Activated CD4-positive, alpha-beta T cell treated with anti-CD3 and anti-CD28 coated beads for 36 hours (primary cell): ENCODE measurements at regions of chrX and their contacts with region 1.

Region 1: GRCh38 chrX:128106630-128107029 is 54.4 kb upstream of the ACTRT1 start:
- DNase-seq: no peak
- ATAC-seq: no peak
- H3K4me3 Mint-ChIP-seq: no peak overlapping the region
- H3K27ac Mint-ChIP-seq: no peak overlapping the region
- H3K4me1 Mint-ChIP-seq: no peaks in the 10 kb centered on the region
- H3K27me3 Mint-ChIP-seq: no peaks in the 10 kb centered on the region

Region 2: GRCh38 chrX:128975745-128976144 is 869.1 kb after region 1 on chrX:
- CTCF ChIA-PET with region 1: no interaction called
- POLR2A ChIA-PET with region 1: no interaction called
- intact Hi-C with region 1: loop called in 1 of 2 experiments (anchors 5 kb)
- DNase-seq: peak; percentile 42
- ATAC-seq: no peak
- H3K4me3 Mint-ChIP-seq: no peak overlapping the region
- H3K27ac Mint-ChIP-seq: no peak overlapping the region
- H3K4me1 Mint-ChIP-seq: no peaks in the 10 kb centered on the region
- H3K27me3 Mint-ChIP-seq: no peaks in the 10 kb centered on the region